GM10248 (cell line): ENCODE measurements at regions of chr1 and their contacts with region 1.

Region 1: DNA sequence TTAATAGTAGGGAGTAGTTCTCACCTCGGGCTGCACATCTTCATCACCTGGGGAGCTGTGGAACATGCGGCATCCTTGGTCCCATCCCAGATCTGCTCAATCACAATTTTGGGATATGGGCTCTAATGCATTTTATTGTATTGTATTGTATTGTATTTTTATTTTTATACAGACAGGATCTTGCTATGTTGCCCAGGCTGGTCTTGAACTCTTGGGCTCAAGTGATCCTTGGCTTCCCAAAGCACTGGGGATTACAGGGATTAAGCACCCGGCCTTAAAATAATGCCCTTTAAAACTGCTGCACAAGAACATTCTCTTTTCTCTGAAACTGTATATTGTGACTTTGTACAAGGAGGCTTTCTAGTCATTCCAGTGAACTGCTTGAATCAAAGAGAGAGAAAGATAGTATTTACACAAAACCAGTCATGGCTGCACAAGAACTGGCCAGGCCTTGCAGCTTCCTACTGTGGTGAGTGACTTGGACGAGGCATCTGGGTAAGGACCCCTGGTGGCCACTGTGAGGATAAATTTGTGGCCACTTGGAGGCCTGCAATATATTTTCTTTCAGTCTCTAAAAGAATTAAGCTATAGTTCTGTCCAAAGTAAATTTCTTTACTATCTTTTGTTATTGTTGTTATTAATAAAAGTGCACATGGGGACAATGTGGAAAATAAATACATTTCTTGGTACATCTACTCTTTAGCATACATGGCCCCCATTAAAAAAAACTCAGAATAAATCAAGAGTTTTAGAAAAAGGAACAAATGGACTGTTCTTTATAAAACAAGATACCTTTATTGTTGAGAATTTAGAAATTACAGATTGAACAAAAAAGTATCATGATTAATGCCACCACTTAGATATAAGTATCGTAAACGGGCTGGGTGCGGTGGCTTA is 48.0 kb downstream of the TBCE start:
- DNase-seq: peak; percentile 73
- CTCF ChIP-seq: peak; percentile 65

Region 2: DNA sequence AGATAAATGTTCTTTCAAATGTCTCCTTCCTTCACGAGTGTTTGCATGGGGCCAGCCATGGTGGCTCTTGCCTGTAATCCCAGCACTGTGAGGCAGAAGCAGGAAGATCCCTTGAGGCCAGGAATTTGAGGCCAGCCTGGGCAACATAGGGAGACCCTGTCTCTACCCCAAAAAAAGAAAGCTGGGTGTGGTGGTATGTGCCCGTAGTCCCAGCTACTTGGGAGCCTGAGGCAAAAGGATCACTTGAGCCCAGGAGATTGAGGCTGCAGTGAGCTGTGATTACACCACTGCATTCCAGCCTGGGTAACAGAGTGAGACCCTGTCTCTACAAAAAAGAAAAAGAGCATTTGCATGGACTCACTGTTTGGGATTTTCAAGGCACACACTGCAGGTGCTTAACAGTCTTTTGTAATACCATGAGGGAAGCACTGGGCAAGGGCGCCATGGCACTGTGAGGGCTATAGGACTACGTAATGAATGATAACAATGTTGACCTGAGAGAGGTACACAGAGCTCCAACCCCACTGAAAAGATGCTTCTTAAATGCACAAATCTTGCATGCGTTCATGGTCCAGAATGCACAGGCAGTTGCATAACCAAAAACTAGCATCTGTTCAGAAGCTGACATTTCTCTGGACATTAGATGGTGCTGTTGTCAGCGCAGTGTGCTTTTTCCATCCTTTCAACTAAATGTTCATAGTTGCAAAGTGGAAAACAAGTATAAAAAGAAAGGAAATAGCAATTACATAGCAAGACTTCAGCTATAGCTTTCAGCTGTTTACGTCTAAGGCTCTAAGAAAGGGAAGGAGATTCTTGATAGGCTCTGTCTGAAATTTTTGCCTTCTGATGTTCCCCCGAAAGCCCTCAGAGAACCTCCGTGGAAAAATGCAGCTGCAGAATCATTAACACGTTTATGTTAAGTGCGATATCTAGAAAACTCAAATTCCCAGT is 928.5 kb before region 1 on chr1:
- CTCF ChIA-PET with region 1: interaction called, 20 read pairs
- POLR2A ChIA-PET with region 1: no interaction called
- DNase-seq: no peak
- CTCF ChIP-seq: peak; percentile 66

Region 3: DNA sequence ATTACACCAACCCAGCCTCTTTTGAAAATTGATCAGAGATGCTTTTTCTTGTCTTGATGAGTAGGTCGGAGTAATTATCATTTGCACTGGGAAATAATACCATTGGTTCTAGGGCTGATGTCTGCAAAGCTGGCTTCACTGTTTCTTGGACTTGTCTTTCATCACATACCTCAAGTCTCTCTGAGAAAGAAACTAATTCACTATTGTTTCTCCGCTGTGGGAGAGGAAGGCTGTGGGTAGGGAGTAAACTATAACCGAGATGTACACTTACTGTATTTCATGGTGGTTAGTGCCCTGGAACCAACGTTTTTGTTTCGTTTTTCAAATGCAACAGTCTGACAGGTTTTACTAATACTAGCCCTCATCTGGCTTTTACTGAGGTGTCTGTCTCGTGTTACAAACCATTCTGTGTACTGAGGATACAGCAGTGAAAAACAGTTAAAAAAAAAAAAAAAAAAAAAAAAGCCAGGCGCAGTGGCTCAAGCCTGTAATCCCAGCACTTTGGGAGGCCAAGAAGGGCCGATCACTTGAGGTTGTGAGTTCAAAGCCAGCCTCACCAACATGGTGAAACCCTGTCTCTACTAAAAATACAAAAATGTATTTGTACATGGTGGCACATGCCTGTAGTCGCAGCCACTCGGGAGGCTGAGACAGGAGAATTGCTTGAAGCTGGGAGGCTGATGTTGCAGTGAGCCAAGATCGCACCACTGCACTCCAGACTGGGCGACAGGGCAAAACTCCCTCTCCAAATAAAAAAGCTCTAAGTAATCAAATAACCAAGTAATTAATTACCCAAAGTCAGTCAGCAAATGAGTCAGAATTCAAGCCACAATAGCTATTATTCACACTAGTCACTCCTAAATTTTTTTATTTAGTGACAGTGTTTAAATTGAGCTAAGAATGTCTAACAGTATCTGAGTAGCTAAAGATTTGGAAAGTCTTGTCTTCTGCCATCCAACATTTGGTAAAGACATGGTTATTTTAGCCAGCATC is 309.9 kb before region 1 on chr1:
- CTCF ChIA-PET with region 1: interaction called, 53 read pairs
- POLR2A ChIA-PET with region 1: no interaction called
- DNase-seq: peak; percentile 74
- CTCF ChIP-seq: no peak

Region 4: GRCh38 chr1:235246022-235246991 is 168.9 kb before region 1 on chr1:
- CTCF ChIA-PET with region 1: interaction called, 50 read pairs
- POLR2A ChIA-PET with region 1: no interaction called
- DNase-seq: no peak
- CTCF ChIP-seq: no peak

Region 5: DNA sequence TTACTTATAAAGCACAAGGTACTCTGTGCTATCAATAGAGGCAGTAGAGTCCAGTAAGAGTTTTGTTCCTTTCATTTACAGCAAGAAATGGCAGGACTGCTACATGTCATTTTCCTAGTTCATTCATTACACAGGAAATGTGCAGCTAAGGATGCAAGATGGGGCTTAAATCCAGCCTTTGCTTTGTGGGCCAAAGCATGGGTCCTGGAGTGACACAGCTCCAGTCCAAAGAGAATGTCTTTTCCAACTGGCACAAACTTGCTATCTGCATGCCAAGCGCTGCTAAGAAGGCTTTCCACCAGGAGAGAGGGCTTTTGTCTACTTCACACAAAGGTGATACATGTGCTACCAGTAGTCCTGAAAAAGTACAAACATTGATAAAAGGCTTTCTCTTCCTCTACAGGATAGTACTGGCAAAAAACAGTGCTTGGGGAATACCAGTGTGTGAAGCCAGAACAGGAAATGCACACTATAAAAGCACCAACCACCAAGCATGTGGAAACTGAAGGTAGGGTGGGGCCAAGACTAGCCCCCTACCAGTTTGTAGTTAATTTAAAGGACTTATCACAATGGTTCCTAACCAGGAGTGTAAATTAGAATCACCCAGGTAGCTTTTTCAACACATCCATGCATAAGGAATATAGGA is 156.0 kb before region 1 on chr1:
- CTCF ChIA-PET with region 1: interaction called, 38 read pairs
- POLR2A ChIA-PET with region 1: no interaction called
- DNase-seq: no peak
- CTCF ChIP-seq: no peak

Region 6: GRCh38 chr1:235391874-235392273 is 23.4 kb before region 1 on chr1:
- CTCF ChIA-PET with region 1: interaction called, 19 read pairs
- POLR2A ChIA-PET with region 1: no interaction called
- DNase-seq: no peak
- CTCF ChIP-seq: no peak

Region 7: GRCh38 chr1:235404195-235404594 is 11.1 kb before region 1 on chr1:
- CTCF ChIA-PET with region 1: interaction called, 45 read pairs
- POLR2A ChIA-PET with region 1: no interaction called
- DNase-seq: no peak
- CTCF ChIP-seq: no peak

Region 8: GRCh38 chr1:235648954-235649367 is 233.7 kb after region 1 on chr1:
- CTCF ChIA-PET with region 1: no interaction called
- POLR2A ChIA-PET with region 1: no interaction called
- DNase-seq: peak; percentile 73
- CTCF ChIP-seq: no peak